ENCODE measurements at regions of chr1 and their contacts with region 1.

Region 1: DNA sequence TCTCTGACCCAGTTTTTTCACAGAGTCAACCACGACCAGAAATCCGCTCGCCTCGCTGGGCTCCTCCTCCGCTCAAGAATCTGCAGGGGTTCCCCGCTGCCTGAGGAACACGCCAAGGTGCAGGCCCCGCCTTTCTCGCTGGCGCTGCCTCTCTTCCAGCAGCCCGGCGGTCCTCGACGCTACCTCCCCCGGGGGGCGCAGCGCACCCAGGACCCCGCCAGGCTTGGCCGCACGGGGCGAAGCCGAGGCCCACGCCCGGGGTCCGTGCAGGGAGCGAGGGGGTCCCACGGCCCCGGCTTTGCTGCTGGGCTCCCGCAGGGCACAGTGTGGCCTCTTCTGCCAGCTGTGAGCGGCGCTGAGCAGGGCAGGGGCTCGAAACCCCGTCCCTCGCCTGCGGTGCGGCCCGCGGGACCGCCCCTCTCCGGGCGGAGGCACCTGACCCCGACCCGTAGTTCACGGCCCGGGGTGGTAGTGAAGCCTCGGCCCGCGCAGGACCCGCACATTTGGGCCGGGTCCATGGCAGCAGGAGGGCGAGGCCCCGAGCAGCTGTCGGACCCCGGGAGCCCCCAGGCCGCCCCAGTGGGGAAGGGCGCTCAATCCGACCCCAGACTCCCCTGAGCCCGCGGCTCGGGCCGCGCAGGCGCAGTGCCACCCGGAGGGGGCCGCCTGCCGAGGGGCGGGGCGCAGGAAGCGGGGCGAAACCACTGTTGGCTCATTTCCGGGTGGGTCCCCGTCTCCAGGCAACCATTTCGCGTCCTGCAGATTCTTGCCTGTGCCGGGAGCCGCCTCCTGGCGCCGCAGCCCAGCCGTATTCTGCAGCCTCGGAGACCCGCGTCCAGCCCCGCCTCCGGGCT is 10.0 kb upstream of the MMEL1 start:
- DNase-seq: peak; percentile 89 to 97 (median 94)
- ATAC-seq: peak; percentile 84
- H3K4me3 ChIP-seq: peak overlapping the region; percentile 61
- H3K4me3 Mint-ChIP-seq: peak overlapping the region; percentile 89
- H3K27ac ChIP-seq: peak overlapping the region; percentile 69 to 96
- H3K27ac Mint-ChIP-seq: peak overlapping the region; percentile 89
- H3K4me1 ChIP-seq: peaks cover 29% of the 10 kb centered on the region
- H3K4me1 Mint-ChIP-seq: peaks cover 12% of the 10 kb centered on the region
- H3K27me3 ChIP-seq: no peaks in the 10 kb centered on the region
- H3K27me3 Mint-ChIP-seq: no peaks in the 10 kb centered on the region
- CTCF ChIP-seq: no peak

Region 2: GRCh38 chr1:2044510-2045319 is 598.1 kb before region 1 on chr1:
- CTCF ChIA-PET with region 1: no interaction called
- POLR2A ChIA-PET with region 1: no interaction called
- intact Hi-C with region 1: loop called in 1 of 2 experiments (anchors 5 kb)
- DNase-seq: peak; percentile 61 to 90 (median 76)
- ATAC-seq: peak; percentile 94
- H3K4me3 ChIP-seq: peak overlapping the region; percentile 39
- H3K4me3 Mint-ChIP-seq: peak overlapping the region; percentile 34
- H3K27ac ChIP-seq: no peak overlapping the region
- H3K27ac Mint-ChIP-seq: no peak overlapping the region
- H3K4me1 ChIP-seq: peaks cover 30% of the 10 kb centered on the region
- H3K4me1 Mint-ChIP-seq: peaks cover 22% of the 10 kb centered on the region
- H3K27me3 ChIP-seq: peaks cover 9 to 16% of the 10 kb centered on the region in 2 experiments
- H3K27me3 Mint-ChIP-seq: peaks cover 16% of the 10 kb centered on the region
- CTCF ChIP-seq: peak; percentile 74

Region 3: GRCh38 chr1:2170211-2170610 is 472.6 kb before region 1 on chr1:
- CTCF ChIA-PET with region 1: no interaction called
- POLR2A ChIA-PET with region 1: no interaction called
- intact Hi-C with region 1: no loop called
- DNase-seq: no peak
- ATAC-seq: no peak
- H3K4me3 ChIP-seq: no peak overlapping the region
- H3K4me3 Mint-ChIP-seq: no peak overlapping the region
- H3K27ac ChIP-seq: no peak overlapping the region
- H3K27ac Mint-ChIP-seq: no peak overlapping the region
- H3K4me1 ChIP-seq: peaks cover 10% of the 10 kb centered on the region
- H3K4me1 Mint-ChIP-seq: no peaks in the 10 kb centered on the region
- H3K27me3 ChIP-seq: no peaks in the 10 kb centered on the region
- H3K27me3 Mint-ChIP-seq: no peaks in the 10 kb centered on the region
- CTCF ChIP-seq: no peak

Region 4: DNA sequence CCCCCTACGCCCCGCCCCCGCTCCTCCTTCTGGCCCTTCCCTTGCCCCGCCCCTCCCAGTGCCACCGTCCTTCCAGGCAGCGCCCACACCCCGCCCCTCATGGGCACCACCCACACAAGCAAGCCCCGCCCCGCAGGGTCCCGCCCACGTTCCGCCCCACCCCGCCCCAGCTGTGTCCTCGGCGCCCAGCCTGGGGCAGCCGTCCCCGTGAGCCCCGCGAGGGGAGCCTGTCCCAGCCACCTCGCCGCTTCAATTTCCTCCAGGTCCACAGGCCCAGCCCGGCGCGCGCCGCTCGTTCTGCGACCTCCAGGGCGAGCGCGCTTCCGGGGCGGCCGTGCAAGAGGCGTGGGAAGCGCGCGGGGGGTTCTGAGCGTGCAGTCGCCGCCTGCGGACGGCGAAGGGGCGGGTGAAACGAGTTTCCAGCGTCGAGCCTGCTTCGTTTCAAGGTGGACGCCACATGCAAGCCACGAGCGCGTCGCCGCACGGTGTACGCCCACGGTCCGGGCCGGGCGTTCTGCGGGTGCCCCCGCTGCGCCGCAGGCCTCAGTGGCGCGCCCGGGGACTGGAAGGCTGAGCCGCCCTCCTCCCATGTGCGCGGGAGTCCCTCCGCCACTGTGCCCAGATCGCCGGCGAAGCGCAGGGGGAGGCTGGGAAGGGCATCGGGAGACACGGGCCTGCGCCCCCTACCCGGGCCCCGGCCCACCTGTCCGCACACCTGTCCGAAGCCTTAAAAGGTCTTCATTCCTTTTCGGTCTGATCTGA is 437.4 kb before region 1 on chr1:
- CTCF ChIA-PET with region 1: no interaction called
- POLR2A ChIA-PET with region 1: no interaction called
- intact Hi-C with region 1: loop called in 1 of 2 experiments (anchors 5 kb)
- DNase-seq: peak; percentile 91 to 97 (median 96)
- ATAC-seq: peak; percentile 92
- H3K4me3 ChIP-seq: peak overlapping the region; percentile 42
- H3K4me3 Mint-ChIP-seq: peak overlapping the region; percentile 68
- H3K27ac ChIP-seq: peak overlapping the region in 1 of 2 donors; percentile 35
- H3K27ac Mint-ChIP-seq: no peak overlapping the region
- H3K4me1 ChIP-seq: peaks cover 28% of the 10 kb centered on the region
- H3K4me1 Mint-ChIP-seq: peaks cover 5% of the 10 kb centered on the region
- H3K27me3 ChIP-seq: no peaks in the 10 kb centered on the region
- H3K27me3 Mint-ChIP-seq: no peaks in the 10 kb centered on the region
- CTCF ChIP-seq: no peak

Region 5: GRCh38 chr1:2391041-2391930 is 251.5 kb before region 1 on chr1 and contains the starts of genes MORN1 and RER1:
- CTCF ChIA-PET with region 1: no interaction called
- POLR2A ChIA-PET with region 1: no interaction called
- intact Hi-C with region 1: no loop called
- DNase-seq: peak; percentile 97 to 100 (median 99)
- ATAC-seq: peak; percentile 95
- H3K4me3 ChIP-seq: peak within 1 kb of the TSS; percentile 64
- H3K4me3 Mint-ChIP-seq: peak within 1 kb of the TSS; percentile 95
- H3K27ac ChIP-seq: peak within 1 kb of the TSS; percentile 60 to 63
- H3K27ac Mint-ChIP-seq: peak within 1 kb of the TSS; percentile 88
- H3K4me1 ChIP-seq: peaks cover 45% of the 10 kb centered on the region
- H3K4me1 Mint-ChIP-seq: peaks cover 31% of the 10 kb centered on the region
- H3K27me3 ChIP-seq: no peaks in the 10 kb centered on the region
- H3K27me3 Mint-ChIP-seq: no peaks in the 10 kb centered on the region
- CTCF ChIP-seq: no peak
- total RNA-seq, gene MORN1: 5.3 to 6.5 TPM
- total RNA-seq, gene RER1: 57.9 to 60.7 TPM

Region 6: GRCh38 chr1:2545759-2546514 is 96.8 kb before region 1 on chr1:
- CTCF ChIA-PET with region 1: no interaction called
- POLR2A ChIA-PET with region 1: interaction called, 3 read pairs
- intact Hi-C with region 1: loop called in 1 of 2 experiments (anchors 2 kb)
- DNase-seq: peak; percentile 82 to 97 (median 88)
- ATAC-seq: peak; percentile 45
- H3K4me3 ChIP-seq: peak overlapping the region; percentile 81
- H3K4me3 Mint-ChIP-seq: peak overlapping the region; percentile 95
- H3K27ac ChIP-seq: peak overlapping the region; percentile 96 to 99
- H3K27ac Mint-ChIP-seq: peak overlapping the region; percentile 99
- H3K4me1 ChIP-seq: peaks cover 70% of the 10 kb centered on the region
- H3K4me1 Mint-ChIP-seq: peaks cover 38% of the 10 kb centered on the region
- H3K27me3 ChIP-seq: peaks cover 0 to 2% of the 10 kb centered on the region in 2 experiments
- H3K27me3 Mint-ChIP-seq: no peaks in the 10 kb centered on the region
- CTCF ChIP-seq: no peak

Region 7: GRCh38 chr1:2556277-2556677 is 86.5 kb before region 1 on chr1 and contains the start of gene TNFRSF14:
- CTCF ChIA-PET with region 1: interaction called, 5 read pairs
- POLR2A ChIA-PET with region 1: interaction called, 6 read pairs
- intact Hi-C with region 1: loop called in 1 of 2 experiments (anchors 1 kb)
- DNase-seq: peak; percentile 54 to 90 (median 62)
- ATAC-seq: peak; percentile 79
- H3K4me3 ChIP-seq: peak within 1 kb of the TSS; percentile 99
- H3K4me3 Mint-ChIP-seq: peak within 1 kb of the TSS; percentile 97
- H3K27ac ChIP-seq: peak within 1 kb of the TSS; percentile 96
- H3K27ac Mint-ChIP-seq: peak within 1 kb of the TSS; percentile 98
- H3K4me1 ChIP-seq: peaks cover 59% of the 10 kb centered on the region
- H3K4me1 Mint-ChIP-seq: peaks cover 35% of the 10 kb centered on the region
- H3K27me3 ChIP-seq: no peaks in the 10 kb centered on the region
- H3K27me3 Mint-ChIP-seq: no peaks in the 10 kb centered on the region
- CTCF ChIP-seq: peak; percentile 24
- total RNA-seq, gene TNFRSF14: 191 to 194 TPM

Region 8: GRCh38 chr1:2575801-2576663 is 66.8 kb before region 1 on chr1:
- CTCF ChIA-PET with region 1: no interaction called
- POLR2A ChIA-PET with region 1: no interaction called
- intact Hi-C with region 1: loop called in 1 of 2 experiments (anchors 2 kb)
- DNase-seq: peak in 1 of 14 experiments; percentile 40
- ATAC-seq: no peak
- H3K4me3 ChIP-seq: no peak overlapping the region
- H3K4me3 Mint-ChIP-seq: no peak overlapping the region
- H3K27ac ChIP-seq: no peak overlapping the region
- H3K27ac Mint-ChIP-seq: peak overlapping the region; percentile 49
- H3K4me1 ChIP-seq: peaks cover 55% of the 10 kb centered on the region
- H3K4me1 Mint-ChIP-seq: peaks cover 44% of the 10 kb centered on the region
- H3K27me3 ChIP-seq: no peaks in the 10 kb centered on the region
- H3K27me3 Mint-ChIP-seq: no peaks in the 10 kb centered on the region
- CTCF ChIP-seq: no peak